GM12878 (cell line): ENCODE measurements at regions of chrX and their contacts with region 1.

Region 1: GRCh38 chrX:132219343-132219768 is at the start of gene RAP2C:
- DNase-seq: no peak
- ATAC-seq: peak; percentile 73
- H3K4me3 ChIP-seq: peak within 1 kb of the TSS; percentile 74
- H3K27ac ChIP-seq: peak within 1 kb of the TSS; percentile 57; the same call in 1 of the 2 replicates
- H3K4me1 ChIP-seq: no peaks in the 10 kb centered on the region
- H3K27me3 ChIP-seq: no peaks in the 10 kb centered on the region
- CTCF ChIP-seq: peak; percentile 61 to 76 (median 75)
- EP300 ChIP-seq: no peak
- POLR2A ChIP-seq: peak; percentile 48
- RAD21 ChIP-seq: peak; percentile 58
- polyA plus RNA-seq, gene RAP2C: 20.3 to 27.4 TPM

Region 2: DNA sequence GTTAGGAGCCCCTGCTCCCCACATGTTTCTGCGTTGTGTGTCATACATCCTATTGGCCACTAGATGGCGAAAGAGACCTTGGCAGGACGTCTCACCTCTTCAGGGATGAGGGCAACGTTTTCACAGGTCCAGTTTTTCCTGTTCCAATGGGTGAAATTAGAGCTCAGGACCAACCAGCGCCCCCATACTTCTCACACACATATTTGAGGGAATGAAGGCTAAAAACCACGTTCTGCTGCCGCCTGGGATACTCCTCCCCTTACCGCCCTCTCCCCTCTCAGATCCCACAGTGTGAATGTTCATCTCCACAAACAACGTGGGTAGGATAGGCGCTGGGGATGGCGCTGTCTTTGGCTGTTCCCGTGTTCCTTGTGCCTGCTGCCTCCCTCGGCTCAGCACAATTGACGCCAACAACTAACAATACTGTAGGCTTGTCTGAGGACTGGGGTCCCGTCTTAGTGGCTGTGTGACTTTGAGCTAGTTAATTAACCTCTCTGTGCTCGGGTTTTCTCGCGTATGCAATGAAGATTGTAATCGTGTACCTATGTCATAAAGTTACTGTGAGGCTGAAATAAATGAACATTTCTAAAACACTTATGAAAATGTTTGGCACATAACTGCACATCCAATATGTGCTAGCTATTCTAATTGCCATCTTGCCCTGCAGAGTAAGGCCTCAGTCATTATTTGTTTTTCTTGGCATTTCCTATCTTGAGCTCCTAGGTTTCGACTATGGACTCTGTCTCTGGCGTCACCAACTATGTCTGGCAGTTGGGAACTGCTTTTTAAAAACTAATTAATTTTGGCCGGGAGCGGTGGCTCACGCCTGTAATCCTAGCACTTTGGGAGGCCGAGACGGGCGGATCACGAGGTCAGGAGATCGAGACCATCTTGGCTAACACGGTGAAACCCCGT is 377.6 kb before region 1 on chrX:
- CTCF ChIA-PET with region 1: interaction called, 28 read pairs
- POLR2A ChIA-PET with region 1: no interaction called
- RAD21 ChIA-PET with region 1: interaction called, 14 read pairs
- SMC1A ChIA-PET with region 1: interaction called, 11 read pairs
- in situ Hi-C with region 1: no loop called
- intact Hi-C with region 1: loop called (anchors 1 kb)
- DNase-seq: no peak
- ATAC-seq: peak; percentile 98
- H3K4me3 ChIP-seq: no peak overlapping the region
- H3K27ac ChIP-seq: no peak overlapping the region
- H3K4me1 ChIP-seq: no peaks in the 10 kb centered on the region
- H3K27me3 ChIP-seq: no peaks in the 10 kb centered on the region
- CTCF ChIP-seq: peak; percentile 85 to 90 (median 88)
- EP300 ChIP-seq: no peak
- POLR2A ChIP-seq: no peak
- RAD21 ChIP-seq: peak; percentile 96

Region 3: GRCh38 chrX:132022967-132023895 is 196.1 kb before region 1 on chrX and contains the start of gene STK26:
- CTCF ChIA-PET with region 1: interaction called, 6 read pairs
- POLR2A ChIA-PET with region 1: no interaction called
- RAD21 ChIA-PET with region 1: interaction called, 4 read pairs
- SMC1A ChIA-PET with region 1: interaction called, 5 read pairs
- in situ Hi-C with region 1: no loop called
- intact Hi-C with region 1: loop called (anchors 2 kb)
- DNase-seq: no peak
- ATAC-seq: peak; percentile 86
- H3K4me3 ChIP-seq: peak within 1 kb of the TSS; percentile 71
- H3K27ac ChIP-seq: peak within 1 kb of the TSS; percentile 87
- H3K4me1 ChIP-seq: no peaks in the 10 kb centered on the region
- H3K27me3 ChIP-seq: no peaks in the 10 kb centered on the region
- CTCF ChIP-seq: no peak
- EP300 ChIP-seq: no peak
- POLR2A ChIP-seq: peak; percentile 97
- RAD21 ChIP-seq: no peak
- polyA plus RNA-seq, gene STK26: 30.4 to 34.9 TPM

Region 4: DNA sequence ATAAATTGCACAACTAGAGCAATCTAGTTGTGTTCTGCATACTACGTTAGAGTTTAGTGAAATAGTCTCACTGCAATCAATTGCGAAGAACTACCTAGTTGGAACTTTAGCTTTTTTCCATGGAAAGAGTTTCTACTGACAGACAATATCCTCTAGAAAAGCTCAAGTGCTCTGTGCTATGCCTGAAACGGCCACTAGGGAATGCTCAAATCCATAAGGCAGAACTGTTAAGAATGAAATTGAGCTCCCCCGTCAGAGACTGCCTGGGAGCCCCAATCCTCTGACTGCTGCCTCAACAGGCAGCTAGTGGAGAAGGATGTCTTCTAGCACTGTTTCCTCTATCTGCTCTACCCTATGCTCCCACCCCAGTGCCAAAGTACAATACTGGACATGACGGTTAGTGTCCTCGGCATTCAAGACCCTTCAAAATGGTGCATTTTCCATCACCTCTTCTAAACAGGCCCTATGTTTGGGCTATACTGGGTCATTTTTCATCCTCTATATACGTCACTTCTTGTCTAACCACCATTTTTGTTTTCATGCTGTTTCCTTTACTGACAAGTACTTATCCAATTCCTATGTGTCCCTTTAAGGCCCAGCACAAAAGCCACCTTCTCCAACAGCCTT is 126.8 kb before region 1 on chrX:
- CTCF ChIA-PET with region 1: interaction called, 102 read pairs
- POLR2A ChIA-PET with region 1: interaction called, 7 read pairs
- RAD21 ChIA-PET with region 1: interaction called, 69 read pairs
- SMC1A ChIA-PET with region 1: interaction called, 84 read pairs
- in situ Hi-C with region 1: no loop called
- intact Hi-C with region 1: loop called (anchors 1 kb)
- DNase-seq: peak; percentile 25
- ATAC-seq: peak; percentile 93
- H3K4me3 ChIP-seq: no peak overlapping the region
- H3K27ac ChIP-seq: no peak overlapping the region
- H3K4me1 ChIP-seq: no peaks in the 10 kb centered on the region
- H3K27me3 ChIP-seq: no peaks in the 10 kb centered on the region
- CTCF ChIP-seq: peak; percentile 76 to 81 (median 81)
- EP300 ChIP-seq: no peak
- POLR2A ChIP-seq: no peak
- RAD21 ChIP-seq: peak; percentile 71

Region 5: GRCh38 chrX:132171478-132172260 is 47.7 kb before region 1 on chrX:
- CTCF ChIA-PET with region 1: interaction called, 10 read pairs
- POLR2A ChIA-PET with region 1: interaction called, 3 read pairs
- RAD21 ChIA-PET with region 1: interaction called, 13 read pairs
- SMC1A ChIA-PET with region 1: interaction called, 4 read pairs
- in situ Hi-C with region 1: no loop called
- intact Hi-C with region 1: no loop called
- DNase-seq: no peak
- ATAC-seq: no peak; the same call in 2 of the 3 replicates
- H3K4me3 ChIP-seq: no peak overlapping the region
- H3K27ac ChIP-seq: no peak overlapping the region
- H3K4me1 ChIP-seq: no peaks in the 10 kb centered on the region
- H3K27me3 ChIP-seq: peaks cover 0 to 3% of the 10 kb centered on the region in 2 experiments; a peak in 1 of 4 replicates
- CTCF ChIP-seq: peak in 2 of 3 experiments; percentile 5 to 12; a peak in 2 of 6 replicates
- EP300 ChIP-seq: no peak
- POLR2A ChIP-seq: no peak
- RAD21 ChIP-seq: peak; percentile 37; the same call in 1 of the 2 replicates

Region 6: DNA sequence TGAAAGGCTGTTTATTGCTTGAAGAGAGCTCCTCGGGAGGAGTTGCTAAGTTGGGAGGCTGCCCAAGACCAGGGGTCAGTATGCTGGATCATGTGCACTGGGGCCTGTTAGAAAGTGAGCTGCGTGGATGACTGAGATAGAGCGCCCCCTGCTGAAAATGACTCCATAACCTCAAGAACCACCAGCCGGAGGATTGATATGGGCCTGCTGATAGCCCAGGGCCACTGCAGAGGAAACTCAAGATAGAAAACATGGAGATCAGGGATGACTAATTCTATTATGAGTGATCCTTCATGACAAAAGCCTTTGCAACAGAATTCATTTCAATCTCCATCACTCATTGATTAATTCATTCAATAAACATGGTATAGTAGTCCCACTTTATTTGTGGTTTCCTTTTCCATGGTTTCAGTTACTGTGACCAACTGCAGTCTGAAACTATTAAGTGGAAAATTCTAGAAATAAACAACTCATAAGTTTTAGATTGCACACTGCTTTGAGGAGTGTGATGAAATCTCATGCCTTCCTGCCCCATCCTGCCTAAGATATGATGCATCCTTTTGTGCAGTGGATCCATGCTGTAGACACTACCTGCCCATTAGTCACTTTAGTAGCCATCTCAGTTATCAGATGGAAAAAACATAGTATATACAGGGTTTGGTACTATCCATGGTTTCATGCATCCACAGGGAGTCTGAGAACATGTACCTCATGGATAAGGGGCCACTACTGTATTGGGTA is 396.2 kb after region 1 on chrX:
- CTCF ChIA-PET with region 1: interaction called, 25 read pairs
- POLR2A ChIA-PET with region 1: no interaction called
- RAD21 ChIA-PET with region 1: interaction called, 6 read pairs
- SMC1A ChIA-PET with region 1: interaction called, 3 read pairs
- in situ Hi-C with region 1: no loop called
- intact Hi-C with region 1: no loop called
- DNase-seq: no peak
- ATAC-seq: peak; percentile 93
- H3K4me3 ChIP-seq: no peak overlapping the region
- H3K27ac ChIP-seq: no peak overlapping the region
- H3K4me1 ChIP-seq: no peaks in the 10 kb centered on the region
- H3K27me3 ChIP-seq: no peaks in the 10 kb centered on the region
- CTCF ChIP-seq: peak; percentile 53 to 59 (median 54)
- EP300 ChIP-seq: no peak
- POLR2A ChIP-seq: no peak
- RAD21 ChIP-seq: peak; percentile 51